ENCODE measurements at regions of chr13 and their contacts with region 1.

Region 1: GRCh38 chr13:73677048-73677601 is 457.1 kb downstream of the KLF12 start:
- DNase-seq: no peak
- H3K4me3 ChIP-seq: no peak overlapping the region
- H3K4me3 Mint-ChIP-seq: no peak overlapping the region
- H3K27ac ChIP-seq: no peak overlapping the region
- H3K27ac Mint-ChIP-seq: no peak overlapping the region
- H3K4me1 ChIP-seq: no peaks in the 10 kb centered on the region
- H3K4me1 Mint-ChIP-seq: peaks cover 0 to 3% (median 0%) of the 10 kb centered on the region in 3 donors
- H3K27me3 ChIP-seq: no peaks in the 10 kb centered on the region
- H3K27me3 Mint-ChIP-seq: no peaks in the 10 kb centered on the region

Region 2: DNA sequence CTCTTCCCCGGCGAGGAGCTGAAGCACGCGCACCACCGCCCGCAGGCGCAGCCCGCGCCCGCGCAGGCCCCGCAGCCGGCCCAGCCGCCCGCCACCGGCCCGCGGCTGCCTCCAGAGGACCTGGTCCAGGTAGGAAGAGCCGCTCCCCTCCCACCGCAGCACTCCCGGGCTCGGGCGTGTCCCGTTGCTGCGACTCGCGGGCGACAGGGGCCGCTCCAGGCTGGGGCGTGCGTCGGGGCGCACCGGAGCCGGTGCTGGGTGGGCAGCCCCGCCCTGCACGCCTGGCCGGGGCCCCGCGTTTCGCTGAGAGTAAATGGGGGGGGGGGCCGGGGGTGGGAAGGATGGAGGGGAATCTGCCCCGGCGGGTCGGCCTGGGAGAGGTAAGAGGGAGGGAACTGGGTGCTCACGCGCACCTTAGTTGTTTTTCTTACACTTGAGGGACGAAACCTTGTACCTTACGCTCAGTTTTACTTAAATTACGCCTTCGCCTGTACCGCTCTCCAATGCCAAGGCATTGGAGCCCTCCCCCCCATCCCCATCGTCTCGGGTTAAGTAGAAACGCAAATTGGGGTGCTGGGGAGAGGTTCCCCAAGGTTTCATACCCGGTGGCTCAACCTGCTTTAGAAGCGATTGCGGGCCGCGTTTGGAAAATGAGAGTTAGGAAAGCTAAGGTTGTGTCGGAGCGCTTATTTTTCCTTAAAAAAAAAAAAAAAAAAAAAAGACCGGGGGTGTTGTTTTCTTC is 617.5 kb before region 1 on chr13:
- CTCF ChIA-PET with region 1: no interaction called
- POLR2A ChIA-PET with region 1: interaction called, 11 read pairs
- DNase-seq: peak in 4 of 5 donors; percentile 9 to 62 (median 24)
- H3K4me3 ChIP-seq: peak overlapping the region; percentile 46
- H3K4me3 Mint-ChIP-seq: peak overlapping the region; percentile 51 to 92 (median 82)
- H3K27ac ChIP-seq: no peak overlapping the region
- H3K27ac Mint-ChIP-seq: no peak overlapping the region
- H3K4me1 ChIP-seq: peaks cover 8% of the 10 kb centered on the region
- H3K4me1 Mint-ChIP-seq: peaks cover 18 to 24% (median 20%) of the 10 kb centered on the region in 3 donors
- H3K27me3 ChIP-seq: peaks cover 14% of the 10 kb centered on the region
- H3K27me3 Mint-ChIP-seq: peaks cover 24 to 38% of the 10 kb centered on the region in 2 donors

Region 3: DNA sequence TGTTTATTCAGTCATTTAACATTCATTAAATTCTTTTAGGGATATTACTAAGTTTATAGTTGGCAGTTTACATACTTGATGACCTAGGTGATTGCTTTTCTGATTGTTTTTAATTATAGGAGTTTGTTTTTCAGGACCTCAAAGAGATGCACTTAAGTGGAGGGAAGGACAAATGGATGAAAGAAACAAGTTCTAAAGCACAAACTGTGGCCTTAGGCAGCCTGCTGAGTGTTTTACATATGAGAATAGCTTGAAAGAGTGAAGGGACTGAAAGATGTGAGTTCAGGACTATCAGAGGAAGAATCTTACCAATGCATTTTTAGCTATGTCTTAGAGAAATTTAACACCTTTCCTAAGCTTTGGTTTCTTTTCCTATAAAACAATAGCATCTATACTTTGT is 54.4 kb after region 1 on chr13:
- CTCF ChIA-PET with region 1: no interaction called
- POLR2A ChIA-PET with region 1: no interaction called
- DNase-seq: no peak
- H3K4me3 ChIP-seq: no peak overlapping the region
- H3K4me3 Mint-ChIP-seq: no peak overlapping the region
- H3K27ac ChIP-seq: no peak overlapping the region
- H3K27ac Mint-ChIP-seq: peak overlapping the region in 3 of 8 donors; percentile 19 to 78 (median 32)
- H3K4me1 ChIP-seq: no peaks in the 10 kb centered on the region
- H3K4me1 Mint-ChIP-seq: peaks cover 37 to 63% (median 41%) of the 10 kb centered on the region in 3 donors
- H3K27me3 ChIP-seq: no peaks in the 10 kb centered on the region
- H3K27me3 Mint-ChIP-seq: no peaks in the 10 kb centered on the region

Measured in CD8-positive, alpha-beta memory T cell (primary cell).